Psoas muscle (tissue), 8 donors: ENCODE measurements at regions of chr1 and their contacts with region 1.

Region 1: GRCh38 chr1:69737527-69738185 is 169.9 kb downstream of the LRRC7 start:
- DNase-seq: no peak
- ATAC-seq: peak in 3 of 4 donors; percentile 51 to 69 (median 66)
- H3K4me3 ChIP-seq: no peak overlapping the region
- H3K27ac ChIP-seq: no peak overlapping the region
- H3K4me1 ChIP-seq: no peaks in the 10 kb centered on the region
- H3K27me3 ChIP-seq: no peaks in the 10 kb centered on the region
- CTCF ChIP-seq: peak; percentile 63

Region 2: DNA sequence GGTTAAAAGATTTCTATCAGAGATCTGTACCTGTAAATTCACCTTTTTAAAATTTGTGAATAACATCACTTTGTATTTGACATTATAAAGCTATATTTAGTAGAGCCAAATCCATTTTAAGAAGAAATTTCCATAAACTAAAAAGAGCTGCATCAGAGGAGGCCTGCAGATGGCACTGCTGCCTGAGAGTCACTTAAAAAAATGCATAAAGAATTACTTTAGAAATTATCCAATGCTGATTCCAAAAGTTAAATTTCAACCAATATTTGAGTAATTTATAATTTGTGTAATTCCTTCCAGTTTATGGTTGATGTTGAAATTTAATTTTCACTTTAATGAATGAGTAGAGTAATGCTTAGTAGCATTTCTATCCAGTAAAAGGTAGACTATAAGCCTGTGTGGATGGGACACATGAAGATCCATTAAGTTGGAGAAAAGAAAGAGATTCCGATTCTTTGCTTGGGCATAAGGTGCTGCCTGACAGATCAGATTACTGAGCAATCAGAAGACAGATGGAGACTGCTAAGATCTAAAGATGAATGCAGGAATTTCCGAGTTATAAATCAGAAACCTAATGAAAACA is 1267.2 kb before region 1 on chr1:
- intact Hi-C with region 1: loop called in 1 of 2 experiments (anchors 5 kb)
- DNase-seq: no peak
- ATAC-seq: no peak
- H3K4me3 ChIP-seq: no peak overlapping the region
- H3K27ac ChIP-seq: no peak overlapping the region
- H3K4me1 ChIP-seq: no peaks in the 10 kb centered on the region
- H3K27me3 ChIP-seq: no peaks in the 10 kb centered on the region
- CTCF ChIP-seq: peak; percentile 58

Region 3: GRCh38 chr1:68600049-68600661 is 1137.5 kb before region 1 on chr1:
- intact Hi-C with region 1: loop called (anchors 10 kb)
- DNase-seq: no peak
- ATAC-seq: peak in 1 of 4 donors; percentile 49
- H3K4me3 ChIP-seq: no peak overlapping the region
- H3K27ac ChIP-seq: no peak overlapping the region
- H3K4me1 ChIP-seq: no peaks in the 10 kb centered on the region
- H3K27me3 ChIP-seq: peaks cover 0 to 2% (median 0%) of the 10 kb centered on the region in 3 donors
- CTCF ChIP-seq: peak; percentile 34